Spleen (tissue), 13 donors: ENCODE measurements at regions of chr11 and their contacts with region 1.

Region 1: DNA sequence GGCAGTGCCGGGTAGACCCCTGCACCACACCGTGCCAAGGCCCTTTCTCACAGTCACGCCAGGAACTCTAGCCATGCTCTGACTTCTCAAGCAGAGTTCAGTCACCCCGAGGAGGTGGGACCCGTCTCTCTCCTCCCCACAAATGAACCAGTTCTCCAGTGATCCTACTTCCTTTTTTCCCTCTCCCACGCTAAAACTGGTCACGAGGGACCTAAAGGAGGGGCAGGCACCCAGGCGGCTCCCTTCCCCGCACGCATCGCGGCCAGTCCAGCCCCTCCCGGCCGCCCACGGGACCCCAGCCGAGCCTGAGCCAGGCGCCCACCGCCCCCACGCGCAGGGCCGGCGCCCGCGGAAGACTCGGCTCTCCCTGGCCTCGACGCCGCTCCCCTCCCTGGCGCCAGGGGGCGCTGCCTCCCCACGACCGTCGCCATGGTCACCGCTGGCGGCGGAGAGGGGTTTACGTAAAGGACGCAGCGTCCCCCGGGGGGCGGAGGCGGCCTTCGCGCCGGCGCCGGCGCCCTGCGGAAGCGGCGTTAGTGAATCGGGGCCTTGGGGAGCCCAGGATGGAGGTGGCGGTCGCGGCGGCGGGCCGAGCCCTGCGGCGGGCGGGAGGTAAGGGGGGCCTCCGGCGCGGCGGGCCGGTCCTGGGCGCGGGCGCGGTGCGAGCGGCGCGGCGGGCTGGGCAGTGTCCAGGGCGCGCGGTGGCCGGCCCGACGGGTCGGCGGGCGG is at the start of gene DAGLA:
- DNase-seq: peak; percentile 93
- H3K4me3 ChIP-seq: peak within 1 kb of the TSS; percentile 20 to 74 (median 34)
- H3K27ac ChIP-seq: peak within 1 kb of the TSS in 4 of 8 donors; percentile 27 to 64 (median 46)
- H3K4me1 ChIP-seq: peaks cover 0 to 47% (median 20%) of the 10 kb centered on the region in 6 donors
- H3K27me3 ChIP-seq: peaks cover 0 to 89% (median 5%) of the 10 kb centered on the region in 7 donors
- CTCF ChIP-seq: peak; percentile 70 to 98 (median 95)
- POLR2A ChIP-seq: no peak
- total RNA-seq, gene DAGLA: 2.0 to 5.0 (median 3.9) TPM

Region 2: DNA sequence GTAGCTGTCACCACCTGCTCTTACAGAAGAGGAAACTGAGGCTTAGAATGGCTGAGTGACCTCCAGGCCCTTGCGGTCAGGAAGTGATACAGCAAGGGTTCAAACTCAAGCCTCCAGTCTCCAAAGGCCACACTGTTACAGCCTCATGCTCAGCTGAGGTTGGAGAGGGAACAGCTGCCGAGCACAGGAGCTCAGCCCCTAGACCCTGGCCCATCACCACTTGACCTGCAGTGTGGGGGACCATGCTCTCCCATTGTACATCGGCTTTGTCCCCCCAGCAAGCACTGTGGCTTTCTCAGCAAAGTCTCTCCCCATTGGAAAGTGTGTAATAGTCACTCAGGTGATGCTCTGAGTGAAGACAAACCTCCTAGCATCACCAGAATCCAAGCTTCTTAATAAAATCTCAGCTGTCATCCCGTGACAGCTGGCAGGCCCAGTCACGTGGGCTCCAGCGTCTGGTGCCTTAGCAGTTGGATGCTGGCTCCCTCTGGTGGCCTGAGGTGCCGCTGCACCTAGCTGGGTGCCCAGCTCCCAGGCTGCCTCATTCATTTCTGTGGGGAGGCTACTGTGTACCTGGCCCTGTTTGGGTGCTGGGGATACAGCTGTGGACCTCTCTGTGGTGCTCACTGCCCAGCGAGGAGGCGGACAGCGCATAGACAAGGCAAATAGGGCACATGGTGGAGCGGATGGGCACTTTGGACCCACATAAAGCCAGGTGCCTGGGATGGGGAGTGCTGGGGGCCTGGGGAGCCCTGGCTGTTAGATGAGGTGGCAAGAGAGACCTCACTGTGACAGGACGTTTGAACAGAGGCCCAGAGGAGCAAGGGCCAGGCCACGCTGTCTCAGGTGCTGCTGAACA is 53.3 kb after region 1 on chr11:
- intact Hi-C with region 1: loop called (anchors 5 kb)
- DNase-seq: peak; percentile 96
- H3K4me3 ChIP-seq: no peak overlapping the region
- H3K27ac ChIP-seq: no peak overlapping the region
- H3K4me1 ChIP-seq: peaks cover 0 to 11% (median 7%) of the 10 kb centered on the region in 6 donors
- H3K27me3 ChIP-seq: no peaks in the 10 kb centered on the region
- CTCF ChIP-seq: peak; percentile 94 to 99 (median 98)
- POLR2A ChIP-seq: no peak